ENCODE measurements at regions of chr13 and their contacts with region 1.

Region 1: GRCh38 chr13:24323036-24323738 is 13.8 kb downstream of the C1QTNF9 start:
- DNase-seq: peak; percentile 45
- H3K4me3 ChIP-seq: no peak overlapping the region
- H3K27ac ChIP-seq: no peak overlapping the region
- H3K4me1 ChIP-seq: no peaks in the 10 kb centered on the region
- H3K27me3 ChIP-seq: peaks cover 0 to 26% (median 0%) of the 10 kb centered on the region in 4 donors
- CTCF ChIP-seq: no peak
- EP300 ChIP-seq: no peak
- POLR2A ChIP-seq: no peak

Region 2: DNA sequence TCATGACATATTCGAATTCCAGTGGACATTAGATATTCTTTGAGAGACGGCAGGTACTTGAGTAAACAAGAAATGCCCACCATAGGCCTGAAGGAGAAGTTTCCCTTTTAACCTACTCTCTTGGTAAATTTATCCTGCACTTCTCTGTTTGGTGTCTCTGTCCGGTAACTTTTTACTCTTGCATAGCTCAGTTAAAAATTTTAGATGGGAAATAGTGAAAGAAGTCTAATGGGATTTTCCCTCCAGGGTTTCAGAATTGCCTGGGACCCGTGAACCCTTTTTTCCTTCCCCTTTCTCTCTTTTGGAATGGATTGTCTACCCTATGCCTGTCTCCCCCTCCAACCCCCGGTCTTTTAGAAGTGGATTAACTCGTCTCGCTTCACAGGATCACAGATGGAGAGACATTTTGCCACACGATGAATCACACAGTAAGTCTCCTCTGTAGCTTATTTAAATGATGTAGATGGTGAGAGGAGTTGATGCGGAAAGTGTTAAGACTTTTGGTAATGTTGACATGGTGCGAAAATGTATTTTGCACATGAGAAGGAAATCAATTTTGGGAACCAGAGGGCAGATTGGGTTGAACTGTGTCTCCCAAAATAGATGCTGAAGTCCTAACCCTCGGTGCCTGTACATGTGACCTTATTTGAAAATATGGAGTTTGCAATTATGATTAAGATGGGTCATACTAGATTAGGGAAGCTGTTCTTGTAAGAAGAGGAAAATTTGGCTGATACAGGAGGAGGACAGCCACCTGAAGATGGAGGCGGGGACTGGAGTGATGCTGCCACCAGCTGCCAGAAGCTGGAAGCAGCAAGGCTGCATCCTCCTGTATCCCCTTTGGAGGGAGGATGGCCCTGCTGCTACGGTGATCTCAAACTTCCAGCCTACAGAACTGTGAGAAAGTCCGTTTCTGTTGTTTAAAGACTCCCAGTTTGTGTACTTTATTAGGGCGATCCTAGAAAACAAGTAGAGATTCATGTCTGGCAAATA is 433.3 kb before region 1 on chr13:
- intact Hi-C with region 1: loop called (anchors 5 kb)
- DNase-seq: no peak
- H3K4me3 ChIP-seq: peak overlapping the region; percentile 81 to 100 (median 96)
- H3K27ac ChIP-seq: peak overlapping the region; percentile 92 to 94 (median 93)
- H3K4me1 ChIP-seq: peaks cover 9 to 23% (median 21%) of the 10 kb centered on the region in 4 donors
- H3K27me3 ChIP-seq: no peaks in the 10 kb centered on the region
- CTCF ChIP-seq: no peak
- EP300 ChIP-seq: no peak
- POLR2A ChIP-seq: no peak

Region 3: GRCh38 chr13:24502533-24503378 is 179.6 kb after region 1 on chr13:
- intact Hi-C with region 1: no loop called
- DNase-seq: no peak
- H3K4me3 ChIP-seq: no peak overlapping the region
- H3K27ac ChIP-seq: peak overlapping the region in 2 of 4 donors; percentile 2 to 5
- H3K4me1 ChIP-seq: peaks cover 11 to 19% (median 16%) of the 10 kb centered on the region in 4 donors
- H3K27me3 ChIP-seq: no peaks in the 10 kb centered on the region
- CTCF ChIP-seq: no peak
- EP300 ChIP-seq: no peak
- POLR2A ChIP-seq: no peak

Measured in esophagus muscularis mucosa (tissue), 4 donors.